HEK293 (cell line): ENCODE measurements at regions of chr14 and their contacts with region 1.

Region 1: DNA sequence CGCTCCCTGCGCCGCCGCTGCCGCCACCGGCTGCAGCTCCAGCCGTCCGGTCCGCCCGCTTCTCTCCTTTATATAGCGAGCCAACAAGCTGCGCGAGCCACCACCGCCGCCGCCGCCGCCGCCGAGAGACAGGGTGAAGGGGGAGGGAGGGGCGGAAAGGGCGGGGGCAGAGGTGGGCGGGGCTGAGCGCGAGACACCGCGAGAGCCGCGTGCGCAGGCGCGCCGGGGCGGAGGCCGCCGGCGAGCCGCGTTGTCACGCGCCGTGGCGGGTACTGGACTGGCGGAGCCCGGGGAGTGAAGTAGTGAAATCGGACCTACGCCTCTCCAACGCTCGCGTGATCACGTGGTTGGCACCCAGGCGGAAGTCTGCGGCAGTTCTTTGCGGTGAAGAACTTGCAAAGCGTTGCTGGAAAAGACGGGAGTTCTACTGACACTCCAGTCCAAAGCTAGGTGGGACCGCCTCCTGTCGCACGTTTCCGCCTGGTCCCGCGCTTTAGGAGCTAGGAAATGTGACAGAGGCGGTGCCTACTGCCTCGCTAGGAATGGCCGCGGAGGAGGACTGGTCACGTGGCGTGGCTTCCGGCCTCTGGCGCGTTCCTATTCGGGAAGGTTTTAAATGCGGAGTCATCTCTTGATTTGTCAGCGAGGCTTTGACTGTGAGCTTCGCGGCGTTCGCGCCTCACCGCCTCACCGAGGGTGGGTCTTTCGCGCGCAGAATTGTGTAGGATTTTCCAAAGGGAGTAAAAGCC is at the start of gene GTF2A1:
- H3K4me3 ChIP-seq: peak within 1 kb of the TSS; percentile 78
- H3K27ac ChIP-seq: peak within 1 kb of the TSS; percentile 97
- H3K4me1 ChIP-seq: peaks cover 5% of the 10 kb centered on the region
- CTCF ChIP-seq: no peak

Region 2: GRCh38 chr14:80213599-80213998 is 1007.4 kb before region 1 on chr14:
- CTCF ChIA-PET with region 1: no interaction called
- POLR2A ChIA-PET with region 1: no interaction called
- H3K4me3 ChIP-seq: no peak overlapping the region
- H3K27ac ChIP-seq: no peak overlapping the region
- H3K4me1 ChIP-seq: no peaks in the 10 kb centered on the region
- CTCF ChIP-seq: no peak

Region 3: GRCh38 chr14:81170104-81170828 is 50.7 kb before region 1 on chr14:
- CTCF ChIA-PET with region 1: interaction called, 4 read pairs
- POLR2A ChIA-PET with region 1: interaction called, 18 read pairs
- H3K4me3 ChIP-seq: peak overlapping the region; percentile 55
- H3K27ac ChIP-seq: peak overlapping the region; percentile 80
- H3K4me1 ChIP-seq: no peaks in the 10 kb centered on the region
- CTCF ChIP-seq: peak; percentile 61

Region 4: DNA sequence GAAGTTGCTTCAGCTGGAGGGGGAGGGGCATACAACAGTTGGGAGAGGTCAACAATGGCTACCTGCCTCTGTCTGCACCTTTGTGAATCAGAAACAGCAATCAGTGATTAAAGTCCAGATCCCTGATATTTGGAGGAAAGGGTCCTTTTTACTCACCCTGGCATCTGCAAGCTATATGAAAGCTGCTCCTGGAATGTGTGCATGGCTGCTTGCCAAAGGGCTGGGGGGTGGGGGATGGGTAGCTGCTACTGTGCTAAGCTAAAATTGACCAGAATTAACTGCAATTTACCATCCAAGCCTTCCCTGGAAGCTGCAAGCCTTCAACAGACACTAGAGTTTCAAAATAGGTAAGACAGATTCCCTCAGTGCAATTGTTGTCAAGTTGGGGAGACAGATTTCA is 13.3 kb after region 1 on chr14:
- CTCF ChIA-PET with region 1: interaction called, 4 read pairs
- POLR2A ChIA-PET with region 1: interaction called, 11 read pairs
- H3K4me3 ChIP-seq: no peak overlapping the region
- H3K27ac ChIP-seq: no peak overlapping the region
- H3K4me1 ChIP-seq: peaks cover 5% of the 10 kb centered on the region; the same call in 1 of the 2 replicates
- CTCF ChIP-seq: no peak

Region 5: GRCh38 chr14:81269100-81269978 is 48.3 kb after region 1 on chr14:
- CTCF ChIA-PET with region 1: interaction called, 4 read pairs
- POLR2A ChIA-PET with region 1: interaction called, 12 read pairs
- H3K4me3 ChIP-seq: no peak overlapping the region
- H3K27ac ChIP-seq: no peak overlapping the region
- H3K4me1 ChIP-seq: 0 out of 2 replicates have a peak, but pooled peaks cover 2% of the 10 kb centered on the region
- CTCF ChIP-seq: no peak; the same call in 1 of the 2 replicates